Activated naive CD8-positive, alpha-beta T cell treated with anti-CD3 and anti-CD28 coated beads, Interleukin-2, amount 10 ng/mL, durations not matched to agents 7 days and 5 days (primary cell): ENCODE measurements at regions of chr3 and their contacts with region 1.

Region 1: DNA sequence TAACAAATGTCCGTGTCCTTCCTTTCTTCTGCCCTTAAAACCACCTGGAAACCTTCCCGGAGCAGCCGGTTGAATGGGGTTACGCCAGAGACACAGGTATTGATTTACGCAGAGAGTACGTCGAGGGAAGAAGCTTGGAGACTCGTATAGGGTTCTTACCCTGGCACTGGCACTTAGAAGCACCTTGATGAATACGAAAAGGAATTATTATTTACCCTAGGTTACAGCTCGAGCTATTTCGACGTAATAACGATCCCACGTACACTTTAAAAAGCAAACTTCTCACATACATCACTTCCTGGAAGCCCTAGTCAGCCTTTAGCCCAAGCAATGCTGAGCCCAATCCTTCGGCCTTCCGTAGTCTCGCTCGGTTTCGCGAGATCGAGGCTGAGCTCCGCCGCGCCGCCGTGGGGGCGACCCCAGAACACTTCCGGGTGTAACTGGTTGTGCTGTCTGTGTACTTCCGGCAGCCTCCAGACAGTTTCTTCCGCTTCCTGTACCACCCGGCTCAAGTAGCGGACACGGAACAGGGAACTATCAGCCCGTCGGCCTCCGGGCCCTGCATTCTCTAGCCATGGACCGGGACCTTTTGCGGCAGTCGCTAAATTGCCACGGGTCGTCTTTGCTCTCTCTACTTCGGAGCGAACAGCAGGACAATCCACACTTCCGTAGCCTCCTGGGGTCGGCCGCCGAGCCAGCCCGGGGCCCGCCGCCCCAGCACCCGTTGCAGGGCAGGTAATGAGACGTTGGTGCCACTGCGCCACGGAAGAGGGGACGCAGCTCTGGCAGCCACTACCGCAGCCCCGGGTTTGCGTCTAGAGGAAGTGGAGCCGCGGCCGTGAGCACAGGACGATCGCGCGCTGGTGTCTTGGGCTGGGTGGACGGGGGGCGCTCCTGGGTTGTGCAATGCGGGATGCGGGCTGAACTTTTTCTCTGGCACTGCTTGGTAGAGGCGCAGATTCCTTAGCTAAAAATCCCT is at the start of gene TTC14:
- DNase-seq: peak; percentile 92
- ATAC-seq: peak; percentile 91
- H3K4me3 Mint-ChIP-seq: peak within 1 kb of the TSS; percentile 94
- H3K27ac Mint-ChIP-seq: peak within 1 kb of the TSS; percentile 94
- H3K4me1 Mint-ChIP-seq: peaks cover 21% of the 10 kb centered on the region
- H3K27me3 Mint-ChIP-seq: peaks cover 8% of the 10 kb centered on the region
- total RNA-seq, gene TTC14: 95.3 to 112 TPM

Region 2: DNA sequence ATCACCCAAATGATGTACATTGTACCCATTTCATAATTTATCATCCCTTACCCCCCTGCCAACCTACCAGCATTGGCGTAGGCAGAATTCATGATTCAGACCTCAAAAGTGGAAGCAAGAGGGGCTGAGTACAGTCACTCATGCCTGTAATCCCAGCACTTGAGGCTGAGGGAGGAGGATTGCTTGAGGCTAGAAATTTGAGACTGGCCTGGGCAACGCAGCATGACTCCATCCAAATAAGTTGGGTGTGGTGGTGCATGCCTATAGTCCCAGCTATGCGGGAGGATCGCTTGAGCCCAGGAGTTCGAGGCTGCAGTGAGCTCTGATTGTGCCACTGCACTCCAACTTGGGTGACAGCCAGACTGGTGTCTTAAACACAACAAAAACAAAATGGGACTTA is 10.4 kb after region 1 on chr3:
- POLR2A ChIA-PET with region 1: interaction called, 17 read pairs
- DNase-seq: no peak
- ATAC-seq: no peak
- H3K4me3 Mint-ChIP-seq: no peak overlapping the region
- H3K27ac Mint-ChIP-seq: no peak overlapping the region
- H3K4me1 Mint-ChIP-seq: peaks cover 2% of the 10 kb centered on the region
- H3K27me3 Mint-ChIP-seq: no peaks in the 10 kb centered on the region

Region 3: DNA sequence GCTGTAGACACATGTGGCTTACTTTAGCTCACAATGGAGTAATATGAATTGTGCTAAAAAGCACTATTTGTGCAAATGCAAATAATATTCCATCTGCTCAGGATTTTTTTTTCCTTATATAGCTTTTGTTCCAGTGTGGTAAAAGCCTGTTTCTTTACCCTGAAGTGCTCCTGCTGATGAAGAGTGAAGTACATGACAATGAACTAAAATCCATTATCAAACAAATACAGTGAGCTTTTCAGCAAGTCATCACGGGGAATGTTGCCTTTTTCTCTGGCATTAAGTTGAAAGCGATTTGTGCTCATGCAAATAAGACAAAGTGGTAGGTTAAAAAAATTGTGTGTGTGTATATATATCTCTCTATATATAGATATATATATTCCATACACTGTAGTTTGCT is 105.9 kb after region 1 on chr3:
- POLR2A ChIA-PET with region 1: no interaction called
- DNase-seq: no peak
- ATAC-seq: no peak
- H3K4me3 Mint-ChIP-seq: no peak overlapping the region
- H3K27ac Mint-ChIP-seq: no peak overlapping the region
- H3K4me1 Mint-ChIP-seq: no peaks in the 10 kb centered on the region
- H3K27me3 Mint-ChIP-seq: peaks cover 3% of the 10 kb centered on the region